GM10248 (cell line): ENCODE measurements at regions of chr1 and their contacts with region 1.

Region 1: GRCh38 chr1:18299441-18300338 is 181.0 kb upstream of the KLHDC7A start:
- DNase-seq: peak; percentile 65
- CTCF ChIP-seq: peak; percentile 54

Region 2: DNA sequence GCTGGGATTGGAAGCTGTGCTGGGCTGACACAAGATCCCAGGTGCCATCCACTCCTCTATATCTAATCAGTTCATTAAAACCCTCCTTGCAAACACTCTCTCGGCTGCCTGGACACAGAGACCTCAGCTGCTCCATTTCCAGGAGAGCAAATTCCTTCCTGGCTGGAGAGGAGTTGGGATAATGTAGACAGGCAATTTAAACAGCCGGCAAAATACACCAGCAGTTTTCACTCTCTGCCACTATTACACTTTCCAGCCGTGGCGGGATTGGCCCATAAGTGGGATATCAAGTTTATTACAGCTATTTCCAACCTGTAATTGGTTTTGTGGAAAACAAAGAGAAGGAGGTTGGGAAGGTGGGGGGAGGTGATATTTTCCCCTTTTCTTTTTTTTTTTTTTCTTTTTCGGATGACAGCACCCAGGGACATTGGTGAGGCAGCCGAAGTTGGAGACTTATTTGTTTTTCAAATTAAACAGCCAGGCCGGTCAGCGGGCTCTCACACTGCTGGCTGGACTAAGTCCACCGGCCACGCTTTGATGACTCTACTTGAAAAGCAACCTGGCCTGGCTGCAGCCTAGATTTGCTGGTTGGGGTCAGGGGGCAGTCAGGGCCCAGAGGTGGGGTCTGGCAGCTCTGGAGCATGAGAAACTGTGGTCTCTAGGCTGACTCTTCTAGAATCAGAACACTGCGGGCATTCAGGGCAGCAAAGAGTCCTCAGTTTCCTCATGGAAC is 14.7 kb before region 1 on chr1:
- CTCF ChIA-PET with region 1: interaction called, 16 read pairs
- POLR2A ChIA-PET with region 1: no interaction called
- DNase-seq: no peak
- CTCF ChIP-seq: no peak

Region 3: DNA sequence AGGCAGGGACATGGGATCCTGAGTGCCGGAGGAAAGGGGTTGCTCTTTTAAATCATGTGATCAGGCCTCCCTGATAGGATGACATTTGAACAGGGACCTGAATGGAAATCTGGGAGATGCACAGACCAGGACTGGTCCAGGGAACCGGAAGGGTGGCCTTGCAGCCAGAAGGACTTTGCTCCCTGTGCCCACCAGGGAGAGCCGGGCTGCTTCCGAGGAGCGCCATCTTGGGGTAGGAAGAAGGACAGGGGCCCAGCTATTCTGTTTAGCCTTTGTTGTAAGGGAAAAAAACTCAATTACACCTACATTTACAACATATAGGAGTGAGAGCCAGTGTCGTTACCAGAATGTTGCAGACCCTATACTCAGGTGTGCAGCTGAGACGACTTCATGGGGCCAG is 186.5 kb after region 1 on chr1:
- CTCF ChIA-PET with region 1: no interaction called
- POLR2A ChIA-PET with region 1: no interaction called
- DNase-seq: no peak
- CTCF ChIP-seq: no peak